ENCODE measurements at regions of chr5 and their contacts with region 1.

Region 1: GRCh38 chr5:177425801-177426565 is 493 bp upstream of the GRK6 start:
- DNase-seq: peak; percentile 100
- ATAC-seq: peak; percentile 77
- H3K4me3 Mint-ChIP-seq: peak overlapping the region; percentile 81
- H3K27ac Mint-ChIP-seq: peak overlapping the region; percentile 94
- H3K4me1 Mint-ChIP-seq: peaks cover 36% of the 10 kb centered on the region
- H3K27me3 Mint-ChIP-seq: no peaks in the 10 kb centered on the region

Region 2: DNA sequence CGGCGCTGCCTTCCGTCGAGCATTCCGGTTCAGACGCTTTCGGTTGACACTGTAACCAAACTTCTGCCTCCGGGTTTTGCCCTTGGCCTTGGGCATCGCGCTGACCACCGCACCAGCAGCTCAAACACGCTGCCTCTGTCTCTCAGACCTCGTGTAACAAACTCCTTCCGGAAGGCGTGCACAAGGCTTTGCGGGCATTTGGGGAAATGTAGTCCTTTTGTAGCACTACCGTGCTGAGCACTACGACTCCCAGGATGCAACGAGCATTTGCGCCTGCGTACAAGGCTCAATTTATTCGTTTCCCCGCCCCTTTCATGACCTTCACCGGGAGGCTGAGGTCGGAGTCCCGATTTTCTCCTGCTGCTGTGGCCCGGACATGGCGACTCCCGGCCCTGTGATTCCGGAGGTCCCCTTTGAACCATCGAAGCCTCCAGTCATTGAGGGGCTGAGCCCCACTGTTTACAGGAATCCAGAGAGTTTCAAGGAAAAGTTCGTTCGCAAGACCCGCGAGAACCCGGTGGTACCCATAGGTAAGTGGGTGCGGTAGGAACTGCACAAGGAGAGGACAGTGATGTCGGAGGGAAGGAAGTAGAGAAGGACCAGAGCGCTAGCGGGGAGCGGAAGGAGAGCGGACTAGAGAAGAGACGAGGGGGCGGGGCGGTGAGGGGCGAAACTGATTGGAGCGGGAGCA is 1037.4 kb before region 1 on chr5 and contains the starts of genes HIGD2A and NOP16:
- CTCF ChIA-PET with region 1: no interaction called
- POLR2A ChIA-PET with region 1: no interaction called
- intact Hi-C with region 1: loop called in 1 of 2 experiments (anchors 2 kb)
- DNase-seq: peak; percentile 100
- ATAC-seq: peak; percentile 93
- H3K4me3 Mint-ChIP-seq: peak within 1 kb of the TSS; percentile 95
- H3K27ac Mint-ChIP-seq: peak within 1 kb of the TSS; percentile 100
- H3K4me1 Mint-ChIP-seq: peaks cover 31% of the 10 kb centered on the region
- H3K27me3 Mint-ChIP-seq: no peaks in the 10 kb centered on the region
- total RNA-seq, gene HIGD2A: 104 to 140 TPM
- total RNA-seq, gene NOP16: 54.3 to 65.4 TPM

Region 3: GRCh38 chr5:176902911-176903664 is 522.9 kb before region 1 on chr5:
- CTCF ChIA-PET with region 1: no interaction called
- POLR2A ChIA-PET with region 1: no interaction called
- intact Hi-C with region 1: no loop called
- DNase-seq: no peak
- ATAC-seq: no peak
- H3K4me3 Mint-ChIP-seq: no peak overlapping the region
- H3K27ac Mint-ChIP-seq: peak overlapping the region; percentile 12
- H3K4me1 Mint-ChIP-seq: peaks cover 27% of the 10 kb centered on the region
- H3K27me3 Mint-ChIP-seq: no peaks in the 10 kb centered on the region

Region 4: DNA sequence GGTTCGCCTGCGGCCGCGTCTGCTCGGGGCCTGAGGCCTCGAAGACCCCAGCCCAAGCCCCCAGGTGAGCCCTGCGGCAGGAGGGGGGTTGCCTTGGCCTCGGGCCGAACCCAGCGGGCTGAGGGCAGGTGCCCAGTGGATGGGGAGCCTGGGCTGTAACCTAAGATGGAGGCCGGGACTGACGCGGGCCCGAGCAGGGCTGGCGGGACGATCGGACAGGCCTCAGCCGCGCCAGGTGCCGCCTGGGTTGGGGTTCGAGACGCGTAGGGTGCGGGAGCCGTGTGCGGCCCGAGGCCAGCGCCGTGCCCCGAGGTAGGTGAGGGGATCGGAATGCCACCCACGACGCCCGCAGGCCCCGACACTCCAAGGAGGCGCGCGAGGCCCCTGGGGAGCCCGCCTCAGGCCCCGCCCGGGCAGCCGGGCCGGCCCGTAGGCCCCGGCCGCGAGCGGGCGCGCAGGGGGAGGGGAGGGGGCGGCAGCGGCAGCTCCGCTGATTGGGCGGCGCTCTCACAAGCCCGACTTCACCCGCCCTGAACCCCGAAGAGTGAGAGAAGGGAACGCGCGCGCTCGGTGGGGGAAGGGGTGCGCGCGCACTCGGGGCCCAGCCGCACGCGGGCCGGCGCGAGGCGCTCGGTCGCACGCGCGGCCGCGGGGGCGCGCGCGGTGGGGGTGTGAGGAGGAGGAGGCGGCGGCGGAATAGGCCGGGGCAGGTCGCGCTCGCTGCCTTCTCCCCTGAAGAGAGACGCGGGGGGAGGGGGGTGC is 292.7 kb before region 1 on chr5 and contains the start of gene NSD1:
- CTCF ChIA-PET with region 1: no interaction called
- POLR2A ChIA-PET with region 1: no interaction called
- intact Hi-C with region 1: loop called in 1 of 2 experiments (anchors 1 kb)
- DNase-seq: peak; percentile 95
- ATAC-seq: peak; percentile 81
- H3K4me3 Mint-ChIP-seq: peak within 1 kb of the TSS; percentile 91
- H3K27ac Mint-ChIP-seq: peak within 1 kb of the TSS; percentile 89
- H3K4me1 Mint-ChIP-seq: peaks cover 48% of the 10 kb centered on the region
- H3K27me3 Mint-ChIP-seq: no peaks in the 10 kb centered on the region
- total RNA-seq, gene NSD1: 65.6 to 68.2 TPM

Region 5: GRCh38 chr5:177336112-177336511 is 89.9 kb before region 1 on chr5:
- CTCF ChIA-PET with region 1: no interaction called
- POLR2A ChIA-PET with region 1: no interaction called
- intact Hi-C with region 1: no loop called
- DNase-seq: peak; percentile 75
- ATAC-seq: peak; percentile 91
- H3K4me3 Mint-ChIP-seq: no peak overlapping the region
- H3K27ac Mint-ChIP-seq: no peak overlapping the region
- H3K4me1 Mint-ChIP-seq: peaks cover 13% of the 10 kb centered on the region
- H3K27me3 Mint-ChIP-seq: no peaks in the 10 kb centered on the region

Region 6: GRCh38 chr5:177390363-177391300 is 35.4 kb before region 1 on chr5:
- CTCF ChIA-PET with region 1: interaction called, 29 read pairs
- POLR2A ChIA-PET with region 1: interaction called, 7 read pairs
- intact Hi-C with region 1: loop called (anchors 1 kb)
- DNase-seq: peak; percentile 94
- ATAC-seq: peak; percentile 68
- H3K4me3 Mint-ChIP-seq: peak overlapping the region; percentile 52
- H3K27ac Mint-ChIP-seq: peak overlapping the region; percentile 87
- H3K4me1 Mint-ChIP-seq: peaks cover 36% of the 10 kb centered on the region
- H3K27me3 Mint-ChIP-seq: no peaks in the 10 kb centered on the region

Region 7: DNA sequence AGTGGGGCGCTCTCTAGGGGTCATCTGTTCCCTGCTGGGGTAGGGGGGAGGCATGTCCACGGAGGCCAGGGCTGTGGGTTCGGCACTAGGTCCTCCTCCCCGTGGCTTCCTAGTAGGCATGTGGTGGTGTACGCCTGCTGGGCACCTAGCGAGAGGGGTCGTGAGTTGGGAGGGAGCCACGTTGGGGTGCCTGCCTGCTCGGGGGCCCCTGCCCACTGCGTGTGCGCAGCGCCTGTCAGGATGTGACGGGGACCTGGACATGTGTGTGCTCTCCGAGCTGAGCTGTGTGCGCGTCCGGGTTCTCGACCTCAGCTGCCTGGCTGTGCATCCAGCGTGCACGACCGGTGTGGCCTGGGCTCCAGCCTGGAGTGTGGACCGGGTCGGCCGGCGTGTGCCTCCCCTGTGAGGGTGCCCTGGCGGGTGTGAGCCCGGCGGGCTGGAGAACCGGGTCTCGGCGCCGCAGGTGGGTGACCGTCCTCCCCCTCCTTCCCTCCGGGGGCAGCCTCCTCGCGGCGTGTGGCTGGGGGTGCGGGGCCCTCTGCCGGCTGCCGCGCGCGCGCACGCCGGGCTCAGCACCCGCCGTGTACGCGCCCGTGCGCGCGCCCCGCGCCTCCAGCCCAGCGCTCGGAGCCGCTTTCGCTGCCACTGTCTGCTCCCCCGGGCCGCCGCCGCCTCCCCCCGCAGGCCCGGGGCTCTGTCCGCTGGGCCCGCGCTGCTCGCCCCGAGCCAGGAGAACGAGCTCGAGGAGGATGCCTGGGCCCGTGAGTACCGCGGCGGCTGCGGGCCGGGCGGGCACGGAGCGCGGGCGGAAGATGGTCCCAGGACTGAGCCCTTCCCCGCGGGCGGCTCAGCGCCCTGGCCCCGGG is 20.4 kb after region 1 on chr5 and contains the start of gene PRR7:
- CTCF ChIA-PET with region 1: interaction called, 131 read pairs
- POLR2A ChIA-PET with region 1: interaction called, 85 read pairs
- intact Hi-C with region 1: loop called (anchors 1 to 2 kb)
- DNase-seq: peak; percentile 83
- ATAC-seq: peak; percentile 54
- H3K4me3 Mint-ChIP-seq: peak within 1 kb of the TSS; percentile 51
- H3K27ac Mint-ChIP-seq: peak within 1 kb of the TSS; percentile 89
- H3K4me1 Mint-ChIP-seq: peaks cover 43% of the 10 kb centered on the region
- H3K27me3 Mint-ChIP-seq: no peaks in the 10 kb centered on the region
- total RNA-seq, gene PRR7: 12.3 to 13.0 TPM

Region 8: GRCh38 chr5:177592010-177592834 is 166.2 kb after region 1 on chr5 and contains the start of gene TMED9:
- CTCF ChIA-PET with region 1: no interaction called
- POLR2A ChIA-PET with region 1: no interaction called
- intact Hi-C with region 1: loop called in 1 of 2 experiments (anchors 2 kb)
- DNase-seq: peak; percentile 94
- ATAC-seq: peak; percentile 97
- H3K4me3 Mint-ChIP-seq: peak within 1 kb of the TSS; percentile 98
- H3K27ac Mint-ChIP-seq: peak within 1 kb of the TSS; percentile 99
- H3K4me1 Mint-ChIP-seq: peaks cover 29% of the 10 kb centered on the region
- H3K27me3 Mint-ChIP-seq: peaks cover 5% of the 10 kb centered on the region
- total RNA-seq, gene TMED9: 83.2 to 109 TPM

Measured in activated CD4-positive, alpha-beta T cell treated with anti-CD3 and anti-CD28 coated beads for 36 hours (primary cell).